ENCODE measurements at regions of chr12 and their contacts with region 1.

Region 1: GRCh38 chr12:11885261-11886038 is 185.3 kb upstream of the BCL2L14 start:
- DNase-seq: no peak
- H3K4me3 ChIP-seq: no peak overlapping the region
- H3K27ac ChIP-seq: peak overlapping the region; percentile 56 to 68 (median 62)
- H3K4me1 ChIP-seq: peaks cover 20 to 48% (median 37%) of the 10 kb centered on the region in 4 donors
- H3K27me3 ChIP-seq: no peaks in the 10 kb centered on the region
- CTCF ChIP-seq: no peak
- EP300 ChIP-seq: no peak
- POLR2A ChIP-seq: no peak

Region 2: GRCh38 chr12:12032851-12033588 is 147.6 kb after region 1 on chr12:
- intact Hi-C with region 1: loop called (anchors 10 kb)
- DNase-seq: peak; percentile 94
- H3K4me3 ChIP-seq: peak overlapping the region; percentile 46 to 59 (median 50)
- H3K27ac ChIP-seq: peak overlapping the region; percentile 75 to 79 (median 78)
- H3K4me1 ChIP-seq: peaks cover 8 to 12% (median 10%) of the 10 kb centered on the region in 4 donors
- H3K27me3 ChIP-seq: no peaks in the 10 kb centered on the region
- CTCF ChIP-seq: peak; percentile 83 to 93 (median 90)
- EP300 ChIP-seq: no peak
- POLR2A ChIP-seq: no peak